Aorta (tissue), 5 donors: ENCODE measurements at regions of chr9 and their contacts with region 1.

Region 1: DNA sequence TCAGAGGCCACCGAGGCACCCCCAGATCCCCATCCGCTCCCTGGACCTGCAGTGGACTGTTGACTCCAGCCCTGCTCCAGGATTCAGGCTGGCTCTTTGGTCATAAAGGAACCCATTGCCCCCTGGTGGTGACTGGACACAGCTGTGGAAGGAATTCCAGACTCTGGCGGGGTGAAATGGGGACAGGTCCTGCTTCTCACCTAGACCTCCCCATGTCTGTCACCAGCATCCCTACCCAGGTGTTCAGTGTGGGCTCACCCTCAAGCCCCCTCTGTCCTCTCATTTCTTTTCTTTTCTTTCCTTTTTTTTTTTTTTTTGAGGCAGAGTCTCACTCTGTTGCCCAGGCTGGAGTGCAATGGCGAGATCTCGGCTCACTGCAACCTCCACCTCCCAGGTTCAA is 25.5 kb upstream of the STXBP1 start:
- DNase-seq: peak; percentile 84 to 88
- ATAC-seq: peak; percentile 87
- H3K4me3 ChIP-seq: no peak overlapping the region
- H3K27ac ChIP-seq: no peak overlapping the region
- H3K4me1 ChIP-seq: no peaks in the 10 kb centered on the region
- H3K27me3 ChIP-seq: no peaks in the 10 kb centered on the region

Region 2: DNA sequence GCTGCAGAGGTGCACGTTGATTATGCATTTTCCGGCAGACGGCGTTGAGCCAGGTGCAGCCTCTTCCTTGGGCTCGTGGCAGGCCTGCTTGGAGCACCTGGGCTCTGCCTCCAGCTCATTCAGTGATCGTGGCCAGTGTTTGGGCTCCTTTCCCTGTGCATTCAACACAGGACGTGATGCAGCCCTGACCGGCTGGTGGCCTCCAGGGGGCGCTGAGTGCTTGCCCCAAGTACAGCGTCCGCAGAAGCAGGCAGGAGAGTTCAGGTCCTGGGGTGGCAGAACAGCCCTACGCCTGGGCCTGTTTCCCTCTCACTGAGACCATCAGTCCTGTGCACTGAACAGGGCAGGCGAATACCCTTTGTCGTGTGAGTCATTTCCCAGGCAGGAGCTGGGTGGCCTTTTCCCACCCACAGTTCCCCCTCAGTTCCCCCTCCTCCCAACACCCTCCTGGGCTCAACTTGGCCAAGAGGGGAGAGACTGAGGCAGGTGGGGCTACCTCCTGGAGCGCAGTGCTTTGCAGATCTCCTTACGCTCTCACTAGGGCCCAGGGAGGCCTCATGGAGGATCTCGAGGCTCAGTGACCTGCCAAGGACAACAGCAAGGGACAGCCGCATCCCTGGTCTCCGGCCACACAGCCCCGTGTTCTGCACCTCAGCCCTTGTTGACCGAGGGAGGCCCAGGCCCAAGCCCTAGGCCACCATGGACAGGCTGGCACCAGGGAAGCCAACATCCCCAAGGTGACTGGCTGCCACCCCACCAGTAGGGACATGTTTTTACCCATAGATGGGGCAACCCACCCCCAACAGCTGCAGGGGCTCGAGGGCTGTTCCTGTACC is 82.4 kb before region 1 on chr9:
- intact Hi-C with region 1: loop called (anchors 1 to 2 kb)
- DNase-seq: peak; percentile 91 to 94
- ATAC-seq: peak; percentile 82
- H3K4me3 ChIP-seq: no peak overlapping the region
- H3K27ac ChIP-seq: peak overlapping the region in 1 of 2 donors; percentile 4
- H3K4me1 ChIP-seq: no peaks in the 10 kb centered on the region
- H3K27me3 ChIP-seq: no peaks in the 10 kb centered on the region

Region 3: DNA sequence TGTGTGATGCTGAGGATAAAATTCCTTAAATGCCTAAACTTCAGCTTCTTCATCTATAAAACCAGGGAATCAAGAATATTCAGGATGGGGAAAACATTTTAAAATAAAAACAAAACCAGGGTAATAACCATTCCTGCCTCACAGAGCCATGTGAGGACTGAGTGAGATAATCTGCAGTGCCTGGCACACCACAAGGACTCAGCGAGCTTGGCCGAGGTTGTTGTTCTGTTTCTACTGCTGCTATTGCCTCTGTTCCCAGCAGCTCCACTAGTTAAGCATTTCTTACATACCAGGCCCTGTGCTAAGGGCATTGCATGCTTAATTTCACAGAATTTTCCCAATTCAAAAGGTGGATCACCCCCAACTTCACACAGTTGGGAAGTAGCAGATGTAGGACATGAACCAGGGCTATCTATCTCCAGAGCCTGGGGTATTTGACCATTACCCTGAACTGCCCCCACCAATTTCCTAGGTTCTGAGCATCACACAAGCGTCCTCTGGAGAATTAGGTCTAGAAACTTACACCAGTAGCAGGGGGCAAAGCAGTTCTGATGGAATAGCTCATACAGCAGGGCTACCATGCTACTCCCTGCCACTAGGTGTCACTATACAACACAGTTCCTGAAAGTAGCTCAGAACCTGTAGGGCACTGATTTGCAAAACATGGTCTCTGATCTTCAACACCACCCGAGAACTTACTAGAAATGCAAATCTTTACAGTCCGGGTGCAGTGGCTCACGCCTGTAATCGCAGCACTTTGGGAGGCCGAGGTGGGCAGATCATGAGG is 60.9 kb before region 1 on chr9:
- intact Hi-C with region 1: loop called (anchors 5 kb)
- DNase-seq: no peak
- ATAC-seq: no peak
- H3K4me3 ChIP-seq: no peak overlapping the region
- H3K27ac ChIP-seq: peak overlapping the region in 1 of 2 donors; percentile 60
- H3K4me1 ChIP-seq: no peaks in the 10 kb centered on the region
- H3K27me3 ChIP-seq: no peaks in the 10 kb centered on the region

Region 4: DNA sequence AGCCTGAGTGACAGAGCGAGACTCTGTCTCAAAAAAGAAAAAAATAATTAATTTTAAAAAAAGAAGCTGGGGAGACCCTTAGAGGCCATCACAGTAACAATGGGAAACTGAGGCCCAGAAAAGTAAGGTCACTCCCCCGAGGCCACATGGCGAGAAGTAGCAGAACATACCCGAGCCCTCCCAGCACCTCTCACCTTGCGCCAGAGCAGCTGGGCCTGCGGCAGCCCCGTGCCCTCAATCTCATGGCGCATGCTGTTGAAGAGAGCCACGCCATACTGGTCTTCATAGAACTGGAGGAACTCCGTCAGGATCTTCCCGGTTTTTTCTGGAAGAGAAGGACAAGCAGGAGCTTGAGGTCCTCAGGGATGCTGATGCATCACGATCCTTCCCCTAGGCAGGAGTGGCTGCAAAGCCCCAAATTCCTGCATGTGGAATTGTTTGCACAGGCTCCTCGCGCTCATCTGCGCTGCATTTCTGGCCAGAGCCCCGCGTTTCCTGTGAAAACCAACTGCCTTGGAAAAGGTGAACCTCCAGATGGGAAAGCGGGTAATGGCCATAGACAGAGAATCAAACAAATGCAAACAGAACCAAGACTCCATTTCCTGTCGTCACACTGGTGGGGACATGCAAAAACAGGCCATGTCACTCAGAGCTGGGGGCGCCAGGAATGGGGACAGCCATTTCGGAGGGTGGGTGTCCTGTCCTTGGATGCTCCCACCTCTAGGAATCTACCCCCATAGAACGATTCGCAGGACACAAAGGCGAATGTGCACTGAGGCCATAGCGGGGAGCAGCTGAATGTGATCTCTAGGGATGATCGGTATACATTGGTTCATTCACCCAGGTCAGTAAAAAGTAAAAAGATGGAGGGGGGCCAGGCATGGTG is 54.8 kb before region 1 on chr9:
- intact Hi-C with region 1: loop called (anchors 5 kb)
- DNase-seq: peak in 1 of 2 donors; percentile 66
- ATAC-seq: no peak
- H3K4me3 ChIP-seq: no peak overlapping the region
- H3K27ac ChIP-seq: no peak overlapping the region
- H3K4me1 ChIP-seq: no peaks in the 10 kb centered on the region
- H3K27me3 ChIP-seq: no peaks in the 10 kb centered on the region